Psoas muscle (tissue), 8 donors: ENCODE measurements at regions of chr11 and their contacts with region 1.

Region 1: DNA sequence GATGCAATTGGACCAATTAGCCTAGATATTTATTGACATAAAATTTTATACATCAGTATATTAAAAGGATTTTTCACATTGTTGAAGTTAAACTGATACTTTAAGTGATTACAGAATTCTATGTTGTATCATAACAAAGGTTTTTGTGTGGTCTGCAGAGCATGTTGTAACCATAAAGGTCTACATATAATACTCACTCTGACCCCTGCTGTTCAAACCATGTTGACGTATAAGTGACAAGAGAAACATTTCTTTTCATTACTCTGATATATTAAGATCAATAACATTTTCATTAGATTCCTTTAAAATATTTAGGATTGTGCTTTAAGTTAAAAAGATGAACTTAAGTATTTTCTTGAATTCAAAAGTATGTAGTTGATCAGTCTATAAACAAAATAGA is 63.9 kb downstream of the GAS2 start:
- DNase-seq: no peak
- ATAC-seq: peak in 2 of 4 donors; percentile 58 to 60
- H3K4me3 ChIP-seq: no peak overlapping the region
- H3K27ac ChIP-seq: no peak overlapping the region
- H3K4me1 ChIP-seq: peaks cover 18% of the 10 kb centered on the region
- H3K27me3 ChIP-seq: no peaks in the 10 kb centered on the region
- CTCF ChIP-seq: peak; percentile 52

Region 2: GRCh38 chr11:22539821-22540256 is 190.5 kb before region 1 on chr11:
- intact Hi-C with region 1: no loop called
- DNase-seq: no peak
- ATAC-seq: peak; percentile 71 to 86 (median 76)
- H3K4me3 ChIP-seq: no peak overlapping the region
- H3K27ac ChIP-seq: no peak overlapping the region
- H3K4me1 ChIP-seq: no peaks in the 10 kb centered on the region
- H3K27me3 ChIP-seq: no peaks in the 10 kb centered on the region
- CTCF ChIP-seq: peak; percentile 68

Region 3: GRCh38 chr11:22625448-22626287 is 104.7 kb before region 1 on chr11 and contains the start of gene FANCF:
- intact Hi-C with region 1: loop called in 1 of 2 experiments (anchors 5 kb)
- DNase-seq: peak; percentile 87 to 92
- ATAC-seq: peak; percentile 98 to 99 (median 99)
- H3K4me3 ChIP-seq: peak within 1 kb of the TSS; percentile 89
- H3K27ac ChIP-seq: peak within 1 kb of the TSS; percentile 85
- H3K4me1 ChIP-seq: peaks cover 17% of the 10 kb centered on the region
- H3K27me3 ChIP-seq: no peaks in the 10 kb centered on the region
- CTCF ChIP-seq: no peak
- total RNA-seq, gene FANCF: 1.4 to 2.2 (median 1.7) TPM